CD8-positive, alpha-beta memory T cell (primary cell): ENCODE measurements at regions of chr6 and their contacts with region 1.

Region 1: GRCh38 chr6:34610819-34611477 is 54.8 kb upstream of the SPDEF start:
- DNase-seq: no peak
- H3K4me3 ChIP-seq: no peak overlapping the region
- H3K4me3 Mint-ChIP-seq: no peak overlapping the region
- H3K27ac ChIP-seq: no peak overlapping the region
- H3K27ac Mint-ChIP-seq: peak overlapping the region in 6 of 8 donors; percentile 18 to 54 (median 44)
- H3K4me1 ChIP-seq: no peaks in the 10 kb centered on the region
- H3K4me1 Mint-ChIP-seq: peaks cover 4 to 24% (median 23%) of the 10 kb centered on the region in 3 donors
- H3K27me3 ChIP-seq: no peaks in the 10 kb centered on the region
- H3K27me3 Mint-ChIP-seq: no peaks in the 10 kb centered on the region

Region 2: DNA sequence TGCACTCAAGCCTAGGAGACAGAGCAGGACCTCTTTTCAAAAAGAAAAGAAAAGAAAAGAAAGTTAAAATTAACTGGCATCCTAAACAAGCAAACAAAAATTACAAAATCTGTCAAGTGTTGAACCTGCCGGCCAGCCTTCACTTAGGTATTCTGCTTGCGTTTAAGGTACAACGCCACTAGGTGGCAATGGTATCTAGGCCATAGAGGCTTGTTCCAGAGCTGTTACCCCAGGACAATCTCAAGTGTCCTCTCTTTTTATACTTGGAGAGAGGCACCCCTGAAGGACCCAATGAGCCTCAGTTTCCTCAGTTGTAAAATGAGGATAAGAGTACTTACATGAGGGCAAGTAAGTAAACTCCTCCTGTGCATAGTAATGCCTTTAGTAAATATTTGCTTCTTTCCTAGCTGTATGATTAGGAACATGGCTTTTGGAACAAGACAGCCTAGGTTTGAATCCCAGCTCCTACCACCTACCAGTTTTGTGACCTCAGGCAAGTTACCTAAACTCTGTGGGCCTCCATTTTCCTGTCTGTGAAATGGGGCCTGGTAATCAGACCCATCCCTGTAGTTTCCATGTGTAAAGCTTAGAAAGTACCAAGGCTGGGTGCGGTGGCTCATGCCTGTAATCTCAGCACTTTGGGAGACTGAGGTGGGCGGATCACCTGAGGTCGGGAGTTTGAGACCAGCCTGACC is 150.9 kb before region 1 on chr6:
- CTCF ChIA-PET with region 1: interaction called, 90 read pairs
- POLR2A ChIA-PET with region 1: no interaction called
- DNase-seq: peak; percentile 22 to 67 (median 40)
- H3K4me3 ChIP-seq: no peak overlapping the region
- H3K4me3 Mint-ChIP-seq: no peak overlapping the region
- H3K27ac ChIP-seq: no peak overlapping the region
- H3K27ac Mint-ChIP-seq: no peak overlapping the region
- H3K4me1 ChIP-seq: no peaks in the 10 kb centered on the region
- H3K4me1 Mint-ChIP-seq: peaks cover under 1 to 2% (median under 1%) of the 10 kb centered on the region in 3 donors
- H3K27me3 ChIP-seq: peaks cover under 1% of the 10 kb centered on the region
- H3K27me3 Mint-ChIP-seq: peaks cover 8 to 13% of the 10 kb centered on the region in 2 donors

Region 3: DNA sequence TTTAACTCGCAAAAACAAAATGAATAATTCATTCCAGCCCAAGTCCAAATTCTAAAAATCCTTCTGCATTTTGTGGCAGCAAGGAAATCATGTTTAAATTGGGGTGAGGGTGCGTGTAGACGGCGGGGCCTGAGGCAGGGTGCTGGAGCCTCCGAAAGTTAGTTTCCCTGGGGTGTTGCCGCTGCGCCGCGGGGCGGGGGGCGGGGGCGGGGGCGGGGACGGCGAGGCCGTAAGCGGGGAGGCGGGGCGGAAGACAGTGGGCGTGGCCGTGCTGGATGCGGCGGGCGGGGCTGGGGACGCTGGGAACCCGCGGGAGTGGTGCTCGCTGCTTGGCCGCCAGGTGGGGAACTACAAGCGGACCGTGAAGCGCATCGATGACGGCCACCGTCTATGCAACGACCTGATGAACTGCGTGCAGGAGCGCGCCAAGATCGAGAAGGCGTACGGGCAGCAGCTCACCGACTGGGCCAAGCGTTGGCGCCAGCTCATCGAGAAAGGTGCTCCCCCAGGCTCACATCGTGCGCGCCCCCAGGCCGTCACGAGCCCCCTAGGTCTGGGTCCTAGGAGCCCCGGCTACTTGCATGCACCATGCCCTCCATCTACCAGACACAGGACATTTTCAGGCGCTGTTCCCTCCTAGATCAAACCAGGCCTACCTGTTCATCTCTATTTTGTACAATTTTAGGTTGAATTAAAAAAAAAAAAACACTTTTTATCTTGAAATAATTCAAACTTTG is 83.8 kb before region 1 on chr6:
- CTCF ChIA-PET with region 1: interaction called, 12 read pairs
- POLR2A ChIA-PET with region 1: no interaction called
- DNase-seq: peak; percentile 91 to 96 (median 93)
- H3K4me3 ChIP-seq: peak overlapping the region; percentile 19
- H3K4me3 Mint-ChIP-seq: peak overlapping the region; percentile 29 to 69 (median 56)
- H3K27ac ChIP-seq: no peak overlapping the region
- H3K27ac Mint-ChIP-seq: peak overlapping the region in 7 of 8 donors; percentile 10 to 85 (median 54)
- H3K4me1 ChIP-seq: peaks cover 14% of the 10 kb centered on the region
- H3K4me1 Mint-ChIP-seq: peaks cover 15 to 24% (median 21%) of the 10 kb centered on the region in 3 donors
- H3K27me3 ChIP-seq: no peaks in the 10 kb centered on the region
- H3K27me3 Mint-ChIP-seq: peaks cover 0 to 1% of the 10 kb centered on the region in 2 donors

Region 4: GRCh38 chr6:34546551-34547321 is 64.2 kb before region 1 on chr6:
- CTCF ChIA-PET with region 1: no interaction called
- POLR2A ChIA-PET with region 1: no interaction called
- DNase-seq: no peak
- H3K4me3 ChIP-seq: no peak overlapping the region
- H3K4me3 Mint-ChIP-seq: no peak overlapping the region
- H3K27ac ChIP-seq: no peak overlapping the region
- H3K27ac Mint-ChIP-seq: no peak overlapping the region
- H3K4me1 ChIP-seq: no peaks in the 10 kb centered on the region
- H3K4me1 Mint-ChIP-seq: no peaks in the 10 kb centered on the region
- H3K27me3 ChIP-seq: no peaks in the 10 kb centered on the region
- H3K27me3 Mint-ChIP-seq: no peaks in the 10 kb centered on the region

Region 5: DNA sequence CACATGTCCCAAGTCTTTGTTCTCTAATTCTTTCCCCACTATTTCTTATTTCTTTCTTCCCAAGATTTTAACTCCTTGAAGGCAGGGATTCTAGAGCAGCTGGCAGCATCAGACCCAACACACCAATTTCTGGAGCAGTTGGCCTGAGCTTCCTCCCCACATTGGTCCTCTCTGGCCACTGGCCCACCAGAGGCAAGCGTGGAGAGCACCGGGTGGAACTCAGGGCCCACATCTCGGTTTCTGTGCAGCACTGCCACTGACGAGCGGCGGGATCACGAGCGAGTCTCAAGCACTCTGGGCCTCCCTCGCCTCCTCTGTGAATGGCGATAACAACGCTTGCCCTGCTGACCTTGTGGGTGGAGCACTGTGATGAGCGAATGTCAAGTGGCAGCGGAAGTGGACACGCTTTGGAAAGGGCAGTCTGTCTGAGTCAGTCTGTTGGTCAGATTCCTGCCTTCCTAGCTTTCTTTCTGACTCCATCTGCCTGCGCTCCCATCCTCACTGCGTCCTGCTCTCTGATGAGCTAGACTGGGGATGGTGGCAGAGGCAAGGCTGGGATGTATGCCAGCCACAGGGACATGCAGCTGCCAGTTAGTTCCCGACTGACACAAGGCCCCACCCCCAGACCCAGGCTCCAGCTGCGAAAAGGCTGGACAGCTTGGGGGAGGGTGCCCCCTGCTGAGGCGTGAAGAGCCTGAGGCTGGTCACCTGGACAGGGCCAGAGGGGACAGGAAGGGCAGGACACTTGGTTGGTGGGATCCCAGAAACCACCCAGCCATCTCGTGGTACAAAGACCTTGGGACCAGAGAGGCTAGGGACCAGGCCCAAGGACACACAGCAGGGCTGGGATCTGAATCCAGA is 50.4 kb before region 1 on chr6:
- CTCF ChIA-PET with region 1: no interaction called
- POLR2A ChIA-PET with region 1: no interaction called
- DNase-seq: no peak
- H3K4me3 ChIP-seq: no peak overlapping the region
- H3K4me3 Mint-ChIP-seq: no peak overlapping the region
- H3K27ac ChIP-seq: peak overlapping the region; percentile 39
- H3K27ac Mint-ChIP-seq: no peak overlapping the region
- H3K4me1 ChIP-seq: no peaks in the 10 kb centered on the region
- H3K4me1 Mint-ChIP-seq: no peaks in the 10 kb centered on the region
- H3K27me3 ChIP-seq: no peaks in the 10 kb centered on the region
- H3K27me3 Mint-ChIP-seq: peaks cover 4% of the 10 kb centered on the region in 2 donors